ENCODE measurements at regions of chr11 and their contacts with region 1.

Region 1: DNA sequence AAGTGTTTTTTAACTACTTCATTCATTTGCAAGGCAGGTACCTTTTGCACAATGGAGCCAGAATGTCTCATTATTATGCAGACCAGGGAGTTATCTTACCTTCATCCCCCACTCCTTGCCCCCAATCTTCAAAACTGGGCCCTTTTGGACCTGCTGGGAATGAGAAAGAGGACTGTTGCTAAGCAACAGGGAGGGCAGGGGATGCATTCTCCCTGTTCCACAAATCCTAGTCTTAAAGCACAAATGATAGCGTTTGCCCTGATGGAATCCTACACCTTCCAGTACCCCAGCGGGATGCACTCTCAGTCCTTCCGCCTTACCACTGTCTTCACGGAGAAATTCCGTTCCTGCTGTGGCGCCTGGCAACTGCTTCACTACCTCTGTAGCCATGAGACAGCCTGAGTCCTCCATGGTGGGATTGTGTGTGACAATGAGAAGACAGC is 4.1 kb upstream of the KCNJ1 start:
- DNase-seq: no peak
- H3K4me3 Mint-ChIP-seq: no peak overlapping the region
- H3K27ac Mint-ChIP-seq: no peak overlapping the region
- H3K4me1 Mint-ChIP-seq: no peaks in the 10 kb centered on the region
- H3K27me3 Mint-ChIP-seq: peaks cover 34% of the 10 kb centered on the region
- CTCF ChIP-seq: no peak

Region 2: DNA sequence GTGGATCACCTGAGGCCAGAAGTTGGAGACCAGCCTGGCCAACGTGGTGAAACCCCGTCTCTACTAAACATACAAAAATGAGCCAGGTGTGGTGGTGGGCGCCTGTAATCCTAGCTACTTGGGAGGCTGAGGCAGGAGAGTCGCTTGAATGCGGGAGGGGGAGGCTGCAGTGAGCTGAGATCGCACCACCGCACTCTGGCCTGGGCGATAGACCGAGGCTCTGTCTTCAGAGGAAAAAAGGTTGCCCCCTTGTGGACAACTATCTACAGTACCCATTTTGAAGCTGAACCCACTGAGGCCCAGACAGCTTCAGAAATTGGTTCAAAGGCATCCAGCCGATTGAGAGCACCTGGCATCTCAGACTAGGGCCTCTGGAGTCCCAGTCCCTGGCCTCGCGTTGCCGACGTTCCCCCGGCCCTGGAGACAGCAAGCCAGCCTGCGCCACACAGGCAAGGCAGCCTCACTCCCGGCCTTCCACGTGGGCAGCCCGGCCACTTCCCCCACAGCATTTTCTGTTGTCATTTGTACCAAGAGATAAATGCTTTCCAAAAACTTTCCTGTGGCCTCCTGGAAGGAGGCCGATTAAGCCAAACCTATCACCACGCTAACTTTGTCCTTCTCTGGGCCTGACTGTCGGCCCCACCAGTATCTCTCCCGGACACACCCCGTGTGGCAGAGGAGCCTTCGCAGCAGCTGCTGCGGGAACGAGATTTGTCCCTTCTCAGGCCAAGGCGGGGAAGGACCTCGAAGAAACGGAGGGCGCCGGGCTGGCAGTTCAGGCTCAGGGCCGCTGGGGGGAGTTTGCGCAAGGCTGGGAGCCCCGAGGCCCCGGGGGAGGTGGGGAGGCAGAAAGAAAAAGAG is 94.5 kb before region 1 on chr11:
- CTCF ChIA-PET with region 1: no interaction called
- intact Hi-C with region 1: no loop called
- DNase-seq: peak; percentile 49
- H3K4me3 Mint-ChIP-seq: no peak overlapping the region
- H3K27ac Mint-ChIP-seq: no peak overlapping the region
- H3K4me1 Mint-ChIP-seq: peaks cover 16% of the 10 kb centered on the region
- H3K27me3 Mint-ChIP-seq: peaks cover 11% of the 10 kb centered on the region
- CTCF ChIP-seq: no peak

Region 3: DNA sequence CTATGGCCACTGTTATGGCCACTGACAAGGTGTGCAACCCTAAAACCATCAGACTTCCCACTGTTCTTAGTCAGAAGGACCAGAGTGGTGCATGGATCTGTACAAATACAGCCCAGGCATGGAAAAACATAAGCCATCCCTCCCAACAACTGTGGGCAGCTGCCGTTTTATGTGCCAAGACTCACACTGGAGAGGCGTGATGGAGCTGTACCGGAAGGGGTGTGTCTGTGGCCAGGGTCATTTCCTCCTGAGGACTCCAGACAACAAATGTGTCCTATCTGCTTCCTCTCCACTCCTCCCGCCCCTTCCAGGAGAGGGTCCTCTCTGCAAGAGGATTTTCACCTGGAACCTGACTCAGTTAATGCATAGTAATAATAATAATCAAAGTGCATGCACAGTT is 33.6 kb before region 1 on chr11:
- CTCF ChIA-PET with region 1: no interaction called
- intact Hi-C with region 1: no loop called
- DNase-seq: no peak
- H3K4me3 Mint-ChIP-seq: no peak overlapping the region
- H3K27ac Mint-ChIP-seq: no peak overlapping the region
- H3K4me1 Mint-ChIP-seq: no peaks in the 10 kb centered on the region
- H3K27me3 Mint-ChIP-seq: no peaks in the 10 kb centered on the region
- CTCF ChIP-seq: no peak

Region 4: GRCh38 chr11:128890543-128891368 is 19.6 kb after region 1 on chr11 and contains the start of gene KCNJ5:
- CTCF ChIA-PET with region 1: no interaction called
- intact Hi-C with region 1: loop called (anchors 1 kb)
- DNase-seq: peak; percentile 35
- H3K4me3 Mint-ChIP-seq: peak within 1 kb of the TSS; percentile 72
- H3K27ac Mint-ChIP-seq: no peak within 1 kb of the TSS
- H3K4me1 Mint-ChIP-seq: peaks cover 10% of the 10 kb centered on the region
- H3K27me3 Mint-ChIP-seq: peaks cover 14% of the 10 kb centered on the region
- CTCF ChIP-seq: no peak
- total RNA-seq, gene KCNJ5: not detected in 2 replicates

Measured in Calu3 (cell line).